B cell (primary cell): ENCODE measurements at regions of chr9 and their contacts with region 1.

Region 1: GRCh38 chr9:75027187-75028107 is 646 bp downstream of the CARNMT1 start:
- DNase-seq: no peak
- ATAC-seq: peak; percentile 28
- H3K4me3 ChIP-seq: peak overlapping the region; percentile 52 to 85 (median 71)
- H3K4me3 Mint-ChIP-seq: peak overlapping the region; percentile 99
- H3K27ac ChIP-seq: peak overlapping the region; percentile 53 to 85
- H3K27ac Mint-ChIP-seq: peak overlapping the region; percentile 98
- H3K4me1 ChIP-seq: peaks cover 17 to 19% of the 10 kb centered on the region in 2 donors
- H3K4me1 Mint-ChIP-seq: peaks cover 33% of the 10 kb centered on the region
- H3K27me3 ChIP-seq: no peaks in the 10 kb centered on the region
- H3K27me3 Mint-ChIP-seq: no peaks in the 10 kb centered on the region
- CTCF ChIP-seq: no peak

Region 2: GRCh38 chr9:75053869-75054268 is 26.4 kb after region 1 on chr9:
- CTCF ChIA-PET with region 1: interaction called, 15 read pairs
- POLR2A ChIA-PET with region 1: interaction called, 7 read pairs
- intact Hi-C with region 1: loop called (anchors 1 kb)
- DNase-seq: peak; percentile 19
- ATAC-seq: peak; percentile 100
- H3K4me3 ChIP-seq: no peak overlapping the region
- H3K4me3 Mint-ChIP-seq: peak overlapping the region; percentile 72
- H3K27ac ChIP-seq: no peak overlapping the region
- H3K27ac Mint-ChIP-seq: peak overlapping the region; percentile 85
- H3K4me1 ChIP-seq: peaks cover 9 to 16% of the 10 kb centered on the region in 2 donors
- H3K4me1 Mint-ChIP-seq: peaks cover 23% of the 10 kb centered on the region
- H3K27me3 ChIP-seq: no peaks in the 10 kb centered on the region
- H3K27me3 Mint-ChIP-seq: no peaks in the 10 kb centered on the region
- CTCF ChIP-seq: no peak

Region 3: GRCh38 chr9:75071530-75072124 is 44.2 kb after region 1 on chr9:
- CTCF ChIA-PET with region 1: interaction called, 12 read pairs
- POLR2A ChIA-PET with region 1: interaction called, 4 read pairs
- intact Hi-C with region 1: no loop called
- DNase-seq: no peak
- ATAC-seq: peak; percentile 54
- H3K4me3 ChIP-seq: no peak overlapping the region
- H3K4me3 Mint-ChIP-seq: no peak overlapping the region
- H3K27ac ChIP-seq: no peak overlapping the region
- H3K27ac Mint-ChIP-seq: peak overlapping the region; percentile 28
- H3K4me1 ChIP-seq: peaks cover 3 to 6% of the 10 kb centered on the region in 2 donors
- H3K4me1 Mint-ChIP-seq: peaks cover 10% of the 10 kb centered on the region
- H3K27me3 ChIP-seq: no peaks in the 10 kb centered on the region
- H3K27me3 Mint-ChIP-seq: no peaks in the 10 kb centered on the region
- CTCF ChIP-seq: no peak

Region 4: DNA sequence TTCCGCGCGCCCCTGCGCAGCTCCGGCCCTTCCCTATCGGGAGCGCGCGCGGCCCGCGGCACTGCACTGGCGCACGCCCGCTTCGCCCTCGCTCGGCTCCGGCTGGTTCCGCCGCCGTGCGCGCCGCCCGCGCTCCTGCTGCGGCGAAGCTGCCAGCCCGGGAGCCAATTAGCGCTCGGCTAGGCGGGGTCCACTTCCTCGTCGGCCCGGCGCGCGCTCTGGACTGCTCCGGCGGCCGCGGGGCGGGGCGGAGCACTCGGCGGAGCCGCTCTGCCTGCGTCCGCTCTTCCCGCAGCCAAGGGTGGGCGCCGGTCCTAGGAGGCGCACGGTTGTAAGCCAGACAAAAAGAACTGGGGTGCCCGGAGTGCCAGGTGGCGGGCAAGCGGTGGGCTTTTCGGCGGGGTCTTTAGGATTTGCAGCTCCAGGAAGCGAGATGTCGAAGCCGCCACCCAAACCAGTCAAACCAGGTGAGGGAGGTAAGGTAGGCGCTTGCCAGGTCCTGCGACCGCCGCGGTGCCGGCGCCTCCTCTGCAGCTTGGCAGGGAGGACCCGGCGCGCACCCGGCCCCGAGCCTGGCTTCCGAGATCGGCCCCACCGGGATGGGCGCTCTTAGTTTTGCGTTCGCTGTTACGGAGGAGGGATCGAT is 60.9 kb after region 1 on chr9 and contains the start of gene OSTF1:
- CTCF ChIA-PET with region 1: interaction called, 14 read pairs
- POLR2A ChIA-PET with region 1: interaction called, 27 read pairs
- intact Hi-C with region 1: loop called (anchors 1 kb)
- DNase-seq: peak; percentile 96
- ATAC-seq: peak; percentile 86
- H3K4me3 ChIP-seq: peak within 1 kb of the TSS; percentile 88 to 99 (median 94)
- H3K4me3 Mint-ChIP-seq: peak within 1 kb of the TSS; percentile 95
- H3K27ac ChIP-seq: peak within 1 kb of the TSS; percentile 79 to 85
- H3K27ac Mint-ChIP-seq: peak within 1 kb of the TSS; percentile 94
- H3K4me1 ChIP-seq: peaks cover 57 to 58% of the 10 kb centered on the region in 2 donors
- H3K4me1 Mint-ChIP-seq: peaks cover 50% of the 10 kb centered on the region
- H3K27me3 ChIP-seq: no peaks in the 10 kb centered on the region
- H3K27me3 Mint-ChIP-seq: no peaks in the 10 kb centered on the region
- CTCF ChIP-seq: no peak
- total RNA-seq, gene OSTF1: 57.8 and 62.0 TPM in 2 replicates